ENCODE measurements at regions of chr11 and their contacts with region 1.

Region 1: DNA sequence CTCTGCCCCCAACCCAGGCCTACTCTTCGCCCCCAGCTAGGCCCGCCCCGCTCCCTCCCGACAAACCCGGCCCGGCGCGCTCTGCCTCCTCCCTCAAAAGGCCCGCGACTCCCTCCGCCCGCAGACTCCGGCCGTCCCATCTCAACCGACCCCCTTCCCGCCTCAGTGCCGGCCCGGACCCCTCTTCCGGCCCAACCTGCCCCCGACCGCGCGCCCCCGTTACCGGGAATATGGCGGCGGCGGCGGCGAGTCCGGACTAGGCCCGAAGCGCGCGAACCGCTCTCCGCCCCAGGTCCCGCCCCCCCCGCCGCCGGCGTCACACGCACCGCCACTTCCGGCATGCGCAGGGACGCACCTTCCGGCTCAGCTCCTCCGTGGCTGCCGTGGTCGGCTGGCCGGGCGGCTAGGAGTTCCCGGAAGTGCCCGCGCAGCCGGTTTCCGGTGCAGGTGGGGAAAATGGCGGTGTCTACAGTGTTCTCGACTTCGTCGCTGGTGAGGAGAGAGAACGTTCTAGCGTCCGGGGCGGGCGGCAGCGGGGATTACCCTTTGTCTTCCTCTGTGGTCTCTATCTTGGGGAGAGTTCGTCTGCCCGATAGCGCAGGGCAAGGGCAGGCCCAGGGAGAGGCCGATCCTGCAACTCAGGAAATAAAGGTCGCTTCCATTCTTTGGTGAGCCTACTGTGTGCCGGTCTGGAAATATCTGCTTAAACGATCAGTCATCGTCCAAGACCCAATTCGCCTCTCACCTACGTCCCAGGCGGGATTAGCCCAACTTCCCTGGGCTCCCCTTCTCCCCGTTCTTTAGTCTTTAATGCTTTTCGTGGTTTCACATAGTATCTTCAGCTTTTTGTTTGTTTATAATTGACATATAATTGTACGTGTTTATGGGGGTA is at the starts of genes CPSF7 and SDHAF2:
- DNase-seq: peak; percentile 97
- H3K4me3 Mint-ChIP-seq: peak within 1 kb of the TSS; percentile 93
- H3K27ac Mint-ChIP-seq: peak within 1 kb of the TSS; percentile 98
- H3K4me1 Mint-ChIP-seq: peaks cover 59% of the 10 kb centered on the region
- H3K27me3 Mint-ChIP-seq: no peaks in the 10 kb centered on the region
- total RNA-seq, gene CPSF7: 106 to 133 TPM
- total RNA-seq, gene SDHAF2: 42.4 to 48.3 TPM

Region 2: GRCh38 chr11:61452825-61453224 is 22.9 kb after region 1 on chr11:
- CTCF ChIA-PET with region 1: interaction called, 15 read pairs
- POLR2A ChIA-PET with region 1: no interaction called
- DNase-seq: no peak
- H3K4me3 Mint-ChIP-seq: no peak overlapping the region
- H3K27ac Mint-ChIP-seq: no peak overlapping the region
- H3K4me1 Mint-ChIP-seq: peaks cover under 1% of the 10 kb centered on the region
- H3K27me3 Mint-ChIP-seq: no peaks in the 10 kb centered on the region

Measured in activated CD4-positive, alpha-beta T cell treated with anti-CD3 and anti-CD28 coated beads, Interleukin-2, amount 10 ng/mL, durations not matched to agents 7 days and 5 days (primary cell).